Breast epithelium (tissue), 4 donors: ENCODE measurements at regions of chr4 and their contacts with region 1.

Region 1: GRCh38 chr4:36587909-36588472 is 306.6 kb downstream of the DTHD1 start:
- DNase-seq: no peak
- H3K4me3 ChIP-seq: no peak overlapping the region
- H3K27ac ChIP-seq: no peak overlapping the region
- H3K4me1 ChIP-seq: no peaks in the 10 kb centered on the region
- H3K27me3 ChIP-seq: no peaks in the 10 kb centered on the region
- CTCF ChIP-seq: no peak
- POLR2A ChIP-seq: no peak

Region 2: DNA sequence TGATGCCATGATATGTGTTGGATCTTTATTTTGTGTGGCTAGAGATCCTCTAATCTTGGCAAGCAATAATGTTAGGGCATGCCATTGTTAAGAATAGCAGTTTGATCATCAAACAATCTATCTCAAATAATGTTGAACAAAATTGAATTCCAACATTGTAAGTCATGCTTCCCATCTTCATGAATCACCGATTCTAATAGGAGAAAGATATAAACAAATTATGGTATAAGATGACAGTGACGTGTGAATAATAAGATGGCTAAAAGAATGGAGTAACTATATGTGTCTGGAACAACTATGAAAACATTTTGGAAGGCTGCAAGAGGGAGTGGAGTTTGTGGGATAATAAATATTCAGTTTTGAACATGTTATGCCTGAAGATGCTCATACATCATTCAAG is 98.2 kb before region 1 on chr4:
- intact Hi-C with region 1: loop called (anchors 5 kb)
- DNase-seq: no peak
- H3K4me3 ChIP-seq: no peak overlapping the region
- H3K27ac ChIP-seq: no peak overlapping the region
- H3K4me1 ChIP-seq: no peaks in the 10 kb centered on the region
- H3K27me3 ChIP-seq: no peaks in the 10 kb centered on the region
- CTCF ChIP-seq: no peak
- POLR2A ChIP-seq: no peak

Region 3: DNA sequence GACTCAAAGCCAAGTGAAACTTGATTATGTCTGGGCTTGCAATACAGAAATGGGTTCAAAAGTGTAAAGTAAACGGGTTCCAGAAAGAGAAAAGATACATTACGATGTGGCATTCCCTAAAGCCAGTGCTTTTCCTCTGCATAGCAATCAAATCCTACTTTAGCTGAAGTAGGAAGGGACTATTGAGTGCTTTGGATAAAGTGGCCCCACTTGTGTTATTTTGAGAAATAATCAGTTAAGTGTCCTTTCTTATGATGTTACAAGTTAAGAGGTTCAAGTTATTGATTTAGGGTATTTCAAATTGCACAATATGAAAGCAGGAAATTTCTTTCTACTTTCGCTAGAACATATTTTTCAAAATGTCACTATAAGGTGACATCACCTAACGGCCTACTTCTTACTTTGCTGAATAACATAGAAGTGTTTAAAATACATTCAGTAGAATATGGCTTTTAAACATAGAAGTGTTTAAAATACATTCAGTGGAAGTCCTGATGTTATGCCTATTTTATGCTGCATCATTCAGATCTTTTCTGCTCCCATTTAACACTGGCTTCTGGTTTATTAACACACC is 71.4 kb before region 1 on chr4:
- intact Hi-C with region 1: no loop called
- DNase-seq: no peak
- H3K4me3 ChIP-seq: no peak overlapping the region
- H3K27ac ChIP-seq: no peak overlapping the region
- H3K4me1 ChIP-seq: no peaks in the 10 kb centered on the region
- H3K27me3 ChIP-seq: no peaks in the 10 kb centered on the region
- CTCF ChIP-seq: no peak
- POLR2A ChIP-seq: no peak

Region 4: DNA sequence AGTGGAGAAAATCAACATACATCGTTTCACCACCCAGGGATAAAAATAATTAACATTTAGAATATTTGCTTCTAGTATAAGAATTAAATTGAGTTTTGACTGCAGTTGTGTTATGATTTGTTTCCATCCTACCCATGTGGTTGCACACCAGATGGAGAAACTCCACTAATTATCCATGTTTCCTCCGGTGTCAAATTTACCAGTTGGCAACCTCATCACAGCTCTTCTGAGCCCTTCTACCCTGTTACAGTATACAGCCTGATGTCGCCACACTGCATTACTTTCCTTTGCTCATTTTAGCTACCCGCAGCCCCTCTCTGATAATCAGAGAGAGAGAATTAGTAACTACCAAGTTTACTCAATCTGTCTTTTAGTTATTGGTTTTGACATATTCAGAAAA is 104.6 kb after region 1 on chr4:
- intact Hi-C with region 1: no loop called
- DNase-seq: no peak
- H3K4me3 ChIP-seq: no peak overlapping the region
- H3K27ac ChIP-seq: no peak overlapping the region
- H3K4me1 ChIP-seq: no peaks in the 10 kb centered on the region
- H3K27me3 ChIP-seq: no peaks in the 10 kb centered on the region
- CTCF ChIP-seq: no peak
- POLR2A ChIP-seq: no peak